Activated T-helper 2 cell treated with anti-CD3 and anti-CD28 coated beads, Interferon-gamma antibody, Interleukin-2, Interleukin-4, amounts not matched to agents 10 μg/mL and 5 μg/mL and 100 μg/mL, durations not matched to agents 14 hours and 24 hours and 36 hours (primary cell): ENCODE measurements at regions of chr9 and their contacts with region 1.

Region 1: GRCh38 chr9:96478829-96479371 is 28.9 kb downstream of the HABP4 start:
- DNase-seq: no peak
- H3K4me3 Mint-ChIP-seq: no peak overlapping the region
- H3K27ac Mint-ChIP-seq: peak overlapping the region; percentile 66
- H3K4me1 Mint-ChIP-seq: peaks cover 10% of the 10 kb centered on the region
- H3K27me3 Mint-ChIP-seq: no peaks in the 10 kb centered on the region

Region 2: DNA sequence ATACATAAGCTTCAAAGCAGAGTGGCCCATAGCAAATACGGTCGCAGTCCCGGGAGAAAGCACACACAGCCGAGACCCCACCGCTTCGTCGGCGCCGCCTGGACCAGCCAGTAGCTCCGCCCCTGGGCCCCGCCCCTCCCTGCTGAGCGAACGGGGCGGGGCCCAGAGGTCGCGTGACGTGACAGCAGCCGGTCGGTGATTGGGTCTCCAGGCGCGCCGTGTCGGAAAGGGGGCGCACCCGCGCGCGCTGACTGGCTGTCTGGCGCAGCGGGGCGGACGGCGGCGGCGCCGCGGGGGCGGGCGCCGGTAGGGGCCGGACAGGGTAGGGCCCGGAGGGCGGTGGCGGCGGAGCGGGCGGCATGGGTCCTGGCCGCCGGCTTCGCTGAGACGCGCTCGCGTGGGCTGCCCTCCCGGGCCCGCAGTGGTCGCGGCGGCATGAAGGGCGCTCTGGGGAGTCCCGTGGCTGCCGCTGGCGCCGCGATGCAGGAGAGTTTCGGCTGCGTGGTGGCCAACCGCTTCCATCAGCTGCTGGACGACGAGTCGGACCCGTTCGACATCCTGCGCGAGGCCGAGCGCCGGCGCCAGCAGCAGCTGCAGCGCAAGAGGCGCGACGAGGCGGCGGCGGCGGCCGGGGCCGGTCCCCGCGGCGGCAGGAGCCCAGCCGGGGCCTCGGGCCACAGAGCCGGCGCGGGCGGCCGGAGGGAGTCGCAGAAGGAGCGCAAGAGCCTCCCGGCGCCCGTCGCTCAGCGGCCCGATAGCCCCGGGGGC is 28.9 kb before region 1 on chr9 and contains the start of gene HABP4:
- intact Hi-C with region 1: loop called (anchors 2 kb)
- DNase-seq: peak; percentile 93
- H3K4me3 Mint-ChIP-seq: peak within 1 kb of the TSS; percentile 86
- H3K27ac Mint-ChIP-seq: no peak within 1 kb of the TSS
- H3K4me1 Mint-ChIP-seq: peaks cover 28% of the 10 kb centered on the region
- H3K27me3 Mint-ChIP-seq: peaks cover 11% of the 10 kb centered on the region
- total RNA-seq, gene HABP4: 14.3 and 14.4 TPM in 2 replicates

Region 3: GRCh38 chr9:96491079-96491879 is 12.4 kb after region 1 on chr9:
- intact Hi-C with region 1: loop called (anchors 1 kb)
- DNase-seq: no peak
- H3K4me3 Mint-ChIP-seq: no peak overlapping the region
- H3K27ac Mint-ChIP-seq: peak overlapping the region; percentile 74
- H3K4me1 Mint-ChIP-seq: peaks cover 2% of the 10 kb centered on the region
- H3K27me3 Mint-ChIP-seq: no peaks in the 10 kb centered on the region

Region 4: DNA sequence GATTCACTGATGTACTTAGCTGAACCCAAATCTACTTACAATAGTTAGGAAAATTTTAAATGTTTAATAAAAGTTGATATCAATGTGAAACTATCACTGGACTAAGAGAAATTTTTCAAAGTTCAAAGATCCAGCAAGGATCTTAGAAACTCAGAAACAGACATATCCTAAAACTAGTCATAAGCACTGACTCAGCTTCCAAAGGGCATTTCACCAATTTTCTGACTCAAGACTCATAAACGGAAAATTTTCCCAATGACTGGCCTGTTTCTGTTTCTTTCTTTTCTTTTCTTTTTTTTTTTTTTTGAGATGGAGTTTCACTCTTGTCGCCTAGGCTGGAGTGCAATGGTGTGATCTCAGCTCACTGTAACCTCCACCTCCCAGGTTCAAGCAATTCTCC is 74.2 kb after region 1 on chr9:
- intact Hi-C with region 1: loop called (anchors 2 kb)
- DNase-seq: no peak
- H3K4me3 Mint-ChIP-seq: no peak overlapping the region
- H3K27ac Mint-ChIP-seq: peak overlapping the region; percentile 11
- H3K4me1 Mint-ChIP-seq: peaks cover 49% of the 10 kb centered on the region
- H3K27me3 Mint-ChIP-seq: no peaks in the 10 kb centered on the region